ENCODE measurements at regions of chr11 and their contacts with region 1.

Region 1: DNA sequence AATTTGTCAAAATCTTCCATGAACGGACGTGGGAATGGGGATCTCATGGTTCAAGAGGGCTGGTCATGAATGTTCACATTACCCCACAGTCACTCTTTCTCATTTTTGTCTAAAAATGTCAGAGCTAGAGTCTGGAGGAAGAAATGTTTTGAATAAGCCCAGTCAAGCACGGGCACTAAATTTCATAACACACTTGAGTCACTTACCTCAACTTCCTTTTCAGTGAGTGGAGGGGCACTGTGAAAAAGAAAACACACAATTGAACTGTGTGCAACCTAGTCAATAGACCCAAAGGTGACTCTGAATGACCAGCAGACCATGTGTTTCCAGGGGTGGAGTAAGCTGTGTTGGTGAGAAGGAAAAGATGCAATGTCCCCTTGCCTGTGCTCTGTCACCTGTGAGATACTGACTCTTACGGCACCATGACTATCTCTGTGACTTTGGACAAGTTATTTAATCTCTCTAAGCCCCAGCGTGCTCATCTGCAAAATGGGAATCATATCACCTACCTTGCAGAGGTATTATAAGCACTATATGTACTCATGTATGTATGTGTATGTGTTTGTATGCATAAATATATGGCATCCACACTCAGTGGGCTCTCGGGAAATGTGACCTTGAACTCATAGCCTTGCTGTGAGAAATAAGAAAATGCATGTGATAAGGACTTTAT is 38.2 kb upstream of the LYVE1 start:
- DNase-seq: no peak
- H3K4me3 ChIP-seq: no peak overlapping the region
- H3K27ac ChIP-seq: no peak overlapping the region
- H3K4me1 ChIP-seq: peaks cover 0 to 12% (median 6%) of the 10 kb centered on the region in 4 experiments; a peak in 5 of 7 replicates
- H3K27me3 ChIP-seq: no peaks in the 10 kb centered on the region
- CTCF ChIP-seq: no peak
- EP300 ChIP-seq: no peak
- POLR2A ChIP-seq: no peak
- RAD21 ChIP-seq: no peak

Region 2: GRCh38 chr11:10514210-10514609 is 92.5 kb before region 1 on chr11:
- CTCF ChIA-PET with region 1: no interaction called
- POLR2A ChIA-PET with region 1: no interaction called
- DNase-seq: no peak
- H3K4me3 ChIP-seq: no peak overlapping the region
- H3K27ac ChIP-seq: no peak overlapping the region
- H3K4me1 ChIP-seq: peaks cover 2 to 7% (median 6%) of the 10 kb centered on the region in 4 experiments; a peak in 4 of 7 replicates
- H3K27me3 ChIP-seq: no peaks in the 10 kb centered on the region
- CTCF ChIP-seq: no peak
- EP300 ChIP-seq: no peak
- POLR2A ChIP-seq: no peak
- RAD21 ChIP-seq: no peak

Region 3: GRCh38 chr11:10631426-10632160 is 24.9 kb after region 1 on chr11:
- CTCF ChIA-PET with region 1: interaction called, 10 read pairs
- POLR2A ChIA-PET with region 1: no interaction called
- DNase-seq: peak in 1 of 2 experiments; percentile 22
- H3K4me3 ChIP-seq: no peak overlapping the region
- H3K27ac ChIP-seq: no peak overlapping the region
- H3K4me1 ChIP-seq: no peaks in the 10 kb centered on the region; a peak in 1 of 7 replicates
- H3K27me3 ChIP-seq: no peaks in the 10 kb centered on the region
- CTCF ChIP-seq: no peak
- EP300 ChIP-seq: no peak
- POLR2A ChIP-seq: no peak
- RAD21 ChIP-seq: no peak

Measured in H1 (cell line).